Activated CD4-positive, alpha-beta T cell treated with anti-CD3 and anti-CD28 coated beads, Interleukin-2, amount 10 ng/mL, durations not matched to agents 24 days and 14 days (primary cell): ENCODE measurements at regions of chr1 and their contacts with region 1.

Region 1: DNA sequence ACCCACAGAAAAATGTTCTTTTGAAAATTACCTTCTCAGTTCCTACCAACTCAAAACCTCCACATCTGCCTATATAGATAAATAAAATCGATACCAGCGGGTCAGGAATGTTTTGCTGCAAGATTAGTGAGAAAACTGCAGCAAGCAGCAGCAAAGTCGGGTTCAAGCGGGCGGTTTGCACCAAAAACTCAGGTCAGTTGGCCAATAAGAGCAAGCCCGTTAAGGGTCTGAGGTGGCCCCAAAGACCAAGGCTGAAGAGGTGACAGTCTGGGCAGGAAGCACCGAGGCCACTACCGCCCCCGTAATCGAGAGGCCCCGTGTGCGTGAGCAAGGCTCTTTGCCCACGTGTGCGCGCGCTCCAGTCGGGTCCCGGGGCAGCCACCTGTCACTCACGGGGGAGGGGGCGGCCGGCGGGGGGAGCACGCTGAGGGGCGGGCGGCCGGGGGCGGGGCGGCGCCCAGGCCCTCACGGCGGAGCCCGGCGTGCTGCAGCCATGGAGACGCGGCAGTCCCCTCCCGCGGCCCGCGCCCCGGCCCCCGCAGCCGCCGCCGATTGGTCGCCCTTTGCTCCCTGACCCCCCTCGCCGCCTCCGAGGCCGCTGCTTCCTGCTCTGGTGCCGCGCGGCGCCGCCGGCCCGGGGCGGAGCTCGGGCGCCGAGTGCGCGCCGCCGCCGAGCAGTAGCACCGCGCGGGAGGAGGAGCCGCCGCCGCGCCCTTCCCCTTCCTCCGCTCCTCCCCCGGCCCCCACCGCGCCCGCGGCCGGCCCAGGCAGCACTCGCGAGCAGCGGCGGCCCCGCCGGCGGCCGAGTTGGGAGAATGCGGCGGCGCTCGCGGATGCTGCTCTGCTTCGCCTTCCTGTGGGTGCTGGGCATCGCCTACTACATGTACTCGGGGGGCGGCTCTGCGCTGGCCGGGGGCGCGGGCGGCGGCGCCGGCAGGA is at the start of gene GALNT2:
- DNase-seq: peak; percentile 97
- H3K4me3 Mint-ChIP-seq: peak within 1 kb of the TSS; percentile 94
- H3K27ac Mint-ChIP-seq: peak within 1 kb of the TSS; percentile 95
- H3K4me1 Mint-ChIP-seq: peaks cover 37% of the 10 kb centered on the region
- H3K27me3 Mint-ChIP-seq: peaks cover 4% of the 10 kb centered on the region
- total RNA-seq, gene GALNT2: 68.5 and 72.4 TPM in 2 replicates

Region 2: GRCh38 chr1:229661022-229661877 is 405.5 kb before region 1 on chr1:
- intact Hi-C with region 1: loop called (anchors 5 kb)
- DNase-seq: peak; percentile 90
- H3K4me3 Mint-ChIP-seq: no peak overlapping the region
- H3K27ac Mint-ChIP-seq: no peak overlapping the region
- H3K4me1 Mint-ChIP-seq: peaks cover 11% of the 10 kb centered on the region
- H3K27me3 Mint-ChIP-seq: no peaks in the 10 kb centered on the region

Region 3: DNA sequence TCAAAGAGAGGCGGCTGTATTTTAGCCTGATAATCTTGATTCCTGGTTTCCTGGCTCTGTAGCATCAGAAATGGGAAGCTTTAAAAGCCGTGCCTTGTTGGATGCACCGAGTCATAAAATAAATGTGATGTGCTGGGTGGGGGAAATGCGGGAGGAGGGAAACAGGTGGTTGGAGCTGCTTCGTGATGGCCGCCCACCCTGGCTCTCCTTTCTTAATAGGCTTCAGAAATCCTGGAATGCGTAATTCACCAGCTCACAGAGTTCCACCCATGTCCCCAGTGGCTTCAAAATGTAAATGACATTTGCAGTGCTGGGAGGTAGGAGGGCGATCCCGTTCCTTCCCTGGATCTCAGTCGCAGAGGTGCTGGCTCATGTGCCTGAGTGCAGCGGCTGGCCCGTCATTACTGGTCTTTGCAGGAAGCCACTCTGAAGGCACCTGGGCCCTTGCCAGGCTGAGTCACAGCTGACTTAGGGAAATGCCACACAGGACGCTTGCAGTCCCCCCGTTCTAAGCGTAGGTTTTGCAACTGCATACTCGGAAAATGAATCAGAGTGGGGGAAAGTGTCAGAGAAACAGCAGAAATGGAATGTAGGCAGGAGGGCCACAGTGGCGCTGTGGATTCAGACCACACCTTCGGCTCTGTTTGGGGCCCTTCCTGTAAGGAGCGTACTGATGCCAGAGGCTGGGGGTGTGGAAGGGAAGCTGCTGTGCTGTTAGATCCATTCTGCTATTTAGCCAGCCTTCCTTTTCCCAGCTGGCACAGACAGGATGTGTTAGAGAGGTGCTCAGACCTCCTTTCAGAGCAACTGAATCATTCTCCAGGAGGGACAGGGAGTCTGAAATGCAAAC is 37.9 kb after region 1 on chr1:
- intact Hi-C with region 1: loop called (anchors 1 kb)
- DNase-seq: peak; percentile 84
- H3K4me3 Mint-ChIP-seq: peak overlapping the region; percentile 77
- H3K27ac Mint-ChIP-seq: peak overlapping the region; percentile 88
- H3K4me1 Mint-ChIP-seq: peaks cover 81% of the 10 kb centered on the region
- H3K27me3 Mint-ChIP-seq: no peaks in the 10 kb centered on the region

Region 4: GRCh38 chr1:230167419-230167852 is 100.7 kb after region 1 on chr1:
- intact Hi-C with region 1: loop called (anchors 2 kb)
- DNase-seq: peak; percentile 78
- H3K4me3 Mint-ChIP-seq: no peak overlapping the region
- H3K27ac Mint-ChIP-seq: peak overlapping the region; percentile 1
- H3K4me1 Mint-ChIP-seq: peaks cover 36% of the 10 kb centered on the region
- H3K27me3 Mint-ChIP-seq: no peaks in the 10 kb centered on the region

Region 5: GRCh38 chr1:230268366-230269170 is 201.8 kb after region 1 on chr1:
- intact Hi-C with region 1: loop called (anchors 1 kb)
- DNase-seq: peak; percentile 65
- H3K4me3 Mint-ChIP-seq: no peak overlapping the region
- H3K27ac Mint-ChIP-seq: peak overlapping the region; percentile 81
- H3K4me1 Mint-ChIP-seq: peaks cover 29% of the 10 kb centered on the region
- H3K27me3 Mint-ChIP-seq: no peaks in the 10 kb centered on the region

Region 6: GRCh38 chr1:230431527-230431926 is 364.8 kb after region 1 on chr1:
- intact Hi-C with region 1: no loop called
- DNase-seq: no peak
- H3K4me3 Mint-ChIP-seq: no peak overlapping the region
- H3K27ac Mint-ChIP-seq: no peak overlapping the region
- H3K4me1 Mint-ChIP-seq: peaks cover 5% of the 10 kb centered on the region
- H3K27me3 Mint-ChIP-seq: peaks cover 25% of the 10 kb centered on the region